Dendritic cell treated with granulocyte-macrophage colony-stimulating factor and Interleukin-4, amounts not matched to agents 40 ng/mL and 50 ng/mL, for 4 days (primary cell): ENCODE measurements at regions of chr1 and their contacts with region 1.

Region 1: DNA sequence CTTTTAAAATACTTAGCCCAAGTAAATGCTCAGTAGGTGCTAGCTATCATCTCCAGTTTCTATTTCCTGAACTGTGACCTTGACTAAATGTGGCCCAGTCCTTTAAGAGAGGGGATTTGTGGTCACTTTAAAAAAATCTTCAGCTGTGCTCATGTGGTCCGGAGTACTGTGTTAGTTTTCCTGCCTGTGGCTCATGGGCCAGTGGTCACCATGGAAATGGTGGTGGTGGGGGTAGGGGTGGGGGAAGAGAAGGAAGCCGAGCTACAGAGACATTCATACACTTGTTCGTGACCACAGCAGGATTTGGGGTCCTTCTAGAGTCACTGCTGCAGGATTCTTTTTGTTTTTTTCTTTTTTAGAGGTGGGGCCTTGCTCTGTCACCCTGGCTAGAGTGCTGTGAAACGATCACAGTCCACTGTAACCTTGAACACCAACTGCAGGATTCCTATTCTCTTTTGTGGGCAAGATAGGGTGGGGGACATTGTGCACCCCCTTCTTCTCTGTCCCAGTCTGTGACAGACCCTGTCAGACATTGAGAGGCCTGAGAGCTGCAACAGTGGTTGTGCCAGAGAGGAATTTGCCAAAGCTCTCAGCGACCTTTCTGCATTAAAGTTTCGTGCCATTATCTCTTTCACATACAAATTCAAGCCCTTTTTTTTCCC is 25.8 kb downstream of the KIF26B start:
- H3K4me3 Mint-ChIP-seq: no peak overlapping the region
- H3K27ac Mint-ChIP-seq: no peak overlapping the region
- H3K4me1 Mint-ChIP-seq: no peaks in the 10 kb centered on the region
- H3K27me3 Mint-ChIP-seq: peaks cover 25% of the 10 kb centered on the region

Region 2: GRCh38 chr1:244821134-244821533 is 359.5 kb before region 1 on chr1:
- intact Hi-C with region 1: loop called (anchors 10 kb)
- H3K4me3 Mint-ChIP-seq: no peak overlapping the region
- H3K27ac Mint-ChIP-seq: no peak overlapping the region
- H3K4me1 Mint-ChIP-seq: peaks cover 32% of the 10 kb centered on the region
- H3K27me3 Mint-ChIP-seq: no peaks in the 10 kb centered on the region